ENCODE measurements at regions of chr16 and their contacts with region 1.

Region 1: DNA sequence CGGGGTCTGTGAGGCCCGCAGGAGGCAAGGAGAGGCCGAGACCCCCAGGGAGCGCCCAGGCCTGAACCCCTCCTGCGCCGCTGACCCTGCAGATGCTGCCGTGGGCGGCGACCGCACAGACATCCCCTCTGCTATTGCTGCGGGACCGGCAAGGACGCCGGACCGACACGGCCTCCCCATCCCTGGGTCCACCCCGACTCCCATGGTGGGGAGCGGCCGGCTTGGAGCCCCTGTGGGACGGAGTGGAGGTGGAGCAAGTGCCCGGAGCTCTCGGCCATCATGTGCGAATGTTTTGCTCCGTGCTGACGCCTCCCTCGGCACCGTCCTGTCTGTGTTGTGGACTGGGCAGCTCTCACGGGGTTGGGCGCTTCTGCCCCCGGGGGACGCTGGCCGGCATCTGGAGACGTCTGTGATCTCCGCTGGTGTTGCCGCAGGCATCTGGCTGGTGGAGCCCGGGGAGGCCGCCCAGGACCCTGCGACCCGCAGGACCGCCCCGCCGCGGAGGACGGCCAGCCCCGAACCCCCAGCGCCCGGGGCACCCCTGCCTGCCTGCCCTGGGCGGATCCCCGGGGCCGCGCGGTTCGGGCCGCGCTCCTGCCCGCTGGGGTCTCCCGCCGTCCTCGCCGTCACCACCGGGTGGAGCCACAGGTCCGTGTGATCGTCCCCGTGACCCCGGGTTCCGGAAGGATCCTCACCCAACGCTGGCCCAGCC is 12.8 kb upstream of the GNG13 start:
- DNase-seq: peak in 9 of 10 donors; percentile 39 to 80 (median 68)
- H3K4me3 ChIP-seq: peak overlapping the region in 51 of 59 donors; percentile 7 to 57 (median 40)
- H3K27ac ChIP-seq: peak overlapping the region in 37 of 59 donors; percentile 5 to 78 (median 51)
- H3K27me3 ChIP-seq: peaks cover 0 to 19% (median 4%) of the 10 kb centered on the region in 45 donors
- CTCF ChIP-seq: peak; percentile 24 to 88 (median 74)

Region 2: DNA sequence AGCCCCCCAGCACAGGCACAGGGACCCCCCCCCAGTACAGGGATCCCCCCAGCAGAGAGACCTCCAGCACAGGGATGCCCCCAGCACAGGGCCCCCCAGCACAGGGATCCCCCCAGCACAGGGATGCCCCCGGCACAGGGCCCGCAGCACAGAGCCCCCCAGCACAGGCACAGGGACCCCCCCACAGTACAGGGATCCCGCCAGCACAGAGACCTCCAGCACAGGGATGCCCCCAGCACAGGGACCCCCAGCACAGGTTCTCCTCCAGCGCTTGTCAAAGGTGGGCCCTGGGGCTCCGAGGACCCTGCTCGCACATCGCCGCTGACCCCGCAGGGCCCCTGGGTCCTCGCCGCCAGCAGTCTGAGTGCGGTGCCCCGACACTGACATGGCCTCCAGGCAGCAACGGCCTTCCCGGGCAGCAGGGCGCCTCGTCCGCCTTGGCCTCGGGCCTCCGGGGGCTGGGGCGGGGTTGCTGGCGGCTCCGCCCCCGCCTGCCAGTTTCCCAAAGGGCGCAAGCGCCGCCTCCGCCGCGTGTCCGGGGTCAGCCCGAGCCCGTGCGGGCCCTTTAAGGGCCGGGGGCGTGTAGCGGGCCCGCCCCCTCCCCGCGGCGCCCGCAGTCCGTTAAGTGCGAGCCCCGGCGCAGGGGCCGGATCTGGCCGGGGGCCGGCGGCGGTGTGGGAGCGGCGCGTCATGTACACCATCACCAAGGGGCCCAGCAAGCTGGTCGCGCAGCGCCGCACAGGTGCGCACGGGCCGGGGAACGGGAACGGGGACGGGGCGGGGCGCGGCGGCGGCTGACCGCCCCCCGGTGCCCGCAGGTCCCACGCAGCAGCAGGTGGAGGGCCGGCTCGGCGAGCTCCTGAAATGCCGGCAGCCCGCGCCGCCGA is 171.8 kb before region 1 on chr16 and contains the start of gene MCRIP2:
- intact Hi-C with region 1: no loop called
- DNase-seq: peak in 9 of 10 donors; percentile 54 to 90 (median 78)
- H3K4me3 ChIP-seq: peak within 1 kb of the TSS; percentile 55 to 91 (median 76)
- H3K27ac ChIP-seq: peak within 1 kb of the TSS; percentile 8 to 95 (median 82)
- H3K27me3 ChIP-seq: no peaks in the 10 kb centered on the region
- CTCF ChIP-seq: peak in 4 of 56 donors; percentile 11 to 19 (median 14)
- total RNA-seq, gene MCRIP2: 24.1 to 97.3 (median 38.0) TPM

Region 3: GRCh38 chr16:832652-833336 is 19.4 kb after region 1 on chr16:
- intact Hi-C with region 1: no loop called
- DNase-seq: no peak
- H3K4me3 ChIP-seq: no peak overlapping the region
- H3K27ac ChIP-seq: no peak overlapping the region
- H3K27me3 ChIP-seq: no peaks in the 10 kb centered on the region
- CTCF ChIP-seq: no peak

Region 4: GRCh38 chr16:877991-878784 is 64.8 kb after region 1 on chr16:
- intact Hi-C with region 1: loop called in 1 of 2 experiments (anchors 10 kb)
- DNase-seq: peak in 1 of 10 donors; percentile 41
- H3K4me3 ChIP-seq: no peak overlapping the region
- H3K27ac ChIP-seq: no peak overlapping the region
- H3K27me3 ChIP-seq: no peaks in the 10 kb centered on the region
- CTCF ChIP-seq: peak in 5 of 56 donors; percentile 10 to 27 (median 14)

Region 5: DNA sequence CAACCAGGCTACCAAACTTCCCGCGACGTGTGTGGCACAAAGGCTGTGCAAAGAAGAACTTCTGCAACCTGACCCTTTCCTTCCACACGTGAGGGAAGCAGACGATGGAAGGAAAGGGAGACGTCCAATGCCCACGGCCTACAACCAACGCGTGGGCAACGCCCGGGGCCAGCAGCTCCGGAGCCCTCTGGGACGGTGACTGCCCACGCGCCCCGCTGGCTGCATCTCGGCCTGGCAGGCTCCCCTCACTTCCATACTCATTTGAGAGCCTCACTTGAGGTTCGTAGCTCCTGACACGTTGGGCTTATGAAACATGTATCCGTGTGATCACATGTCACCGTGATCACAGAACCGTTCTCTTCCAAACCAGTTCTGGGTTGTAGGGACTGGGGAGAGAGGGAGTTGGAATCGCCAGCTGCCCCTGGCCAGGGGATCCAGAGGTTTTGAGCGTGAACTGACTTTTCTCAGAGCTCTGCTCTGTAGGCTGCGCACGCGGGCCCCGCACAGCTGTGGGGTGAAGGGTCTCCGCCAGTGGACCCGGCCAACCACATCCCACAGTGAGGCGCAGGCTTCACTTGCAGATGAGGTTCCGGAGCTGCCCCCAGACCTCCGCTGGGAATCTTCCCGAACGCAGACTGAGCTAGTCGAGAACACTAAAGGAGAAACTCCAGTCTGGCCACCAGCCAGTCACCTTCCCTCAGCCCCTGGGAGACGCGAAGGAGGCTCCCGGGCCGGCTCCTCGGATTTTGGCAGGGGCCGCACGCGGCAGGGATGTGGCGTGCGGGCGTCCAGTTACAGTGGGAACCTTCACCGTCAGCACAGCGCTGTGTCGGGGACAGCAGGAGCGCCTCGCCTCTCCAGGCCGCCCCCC is 156.4 kb after region 1 on chr16:
- intact Hi-C with region 1: loop called in 1 of 2 experiments (anchors 5 kb)
- DNase-seq: peak in 2 of 10 donors; percentile 49 to 56
- H3K4me3 ChIP-seq: peak overlapping the region; percentile 60 to 96 (median 88)
- H3K27ac ChIP-seq: peak overlapping the region in 57 of 59 donors; percentile 38 to 100 (median 98)
- H3K27me3 ChIP-seq: no peaks in the 10 kb centered on the region
- CTCF ChIP-seq: no peak

Region 6: DNA sequence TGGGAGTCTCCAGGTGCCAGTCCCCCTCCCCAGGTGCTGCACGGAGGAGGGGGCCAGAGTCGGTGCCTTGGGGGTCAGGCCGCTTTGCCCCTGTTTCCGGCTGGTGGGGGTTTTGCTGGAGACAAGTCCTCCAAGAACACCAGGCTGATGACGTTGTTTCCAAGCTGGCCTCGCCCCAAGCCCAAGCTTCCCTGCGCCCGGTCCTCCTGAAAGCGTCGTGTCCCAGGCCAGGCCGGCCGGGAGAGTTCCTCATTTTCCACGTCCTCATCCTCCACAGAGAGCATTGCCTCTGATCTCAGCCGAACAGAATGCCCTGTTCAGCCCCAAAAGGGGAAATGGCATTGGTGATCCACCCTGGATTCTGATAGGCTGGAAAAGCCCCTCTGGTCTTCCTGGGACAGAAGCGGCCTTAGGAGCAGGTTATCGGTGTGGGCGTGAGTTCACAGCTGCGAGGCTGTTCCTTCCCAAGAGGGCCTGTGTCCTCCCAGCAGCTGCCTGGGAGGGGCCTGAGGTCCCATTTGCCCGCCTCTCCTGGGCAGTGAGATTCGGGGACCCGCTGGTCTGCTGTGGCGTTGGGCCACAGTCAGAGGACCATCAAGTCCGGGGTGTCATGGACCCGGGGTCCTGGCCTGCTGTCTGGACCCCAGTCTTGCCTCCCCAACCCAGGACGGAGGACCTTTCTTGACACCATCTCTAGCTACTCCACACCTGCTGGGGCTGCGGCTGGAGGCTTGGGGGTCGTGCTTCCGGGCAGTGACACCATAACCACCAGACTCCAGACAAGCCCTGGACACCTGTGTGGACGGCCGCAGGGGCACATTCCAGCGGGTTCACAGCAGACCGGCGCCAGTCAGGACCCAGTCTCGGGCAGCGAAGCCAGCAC is 175.4 kb after region 1 on chr16:
- intact Hi-C with region 1: loop called in 1 of 2 experiments (anchors 5 kb)
- DNase-seq: no peak
- H3K4me3 ChIP-seq: no peak overlapping the region
- H3K27ac ChIP-seq: peak overlapping the region in 55 of 59 donors; percentile 2 to 99 (median 81)
- H3K27me3 ChIP-seq: peaks cover 0 to 1% (median 0%) of the 10 kb centered on the region in 45 donors
- CTCF ChIP-seq: no peak

Region 7: GRCh38 chr16:1054660-1055556 is 241.5 kb after region 1 on chr16:
- intact Hi-C with region 1: loop called (anchors 1 to 2 kb)
- DNase-seq: peak; percentile 59 to 85 (median 78)
- H3K4me3 ChIP-seq: no peak overlapping the region
- H3K27ac ChIP-seq: peak overlapping the region in 31 of 59 donors; percentile 2 to 77 (median 51)
- H3K27me3 ChIP-seq: peaks cover 0 to 9% (median 0%) of the 10 kb centered on the region in 45 donors
- CTCF ChIP-seq: peak; percentile 63 to 98 (median 92)

Region 8: DNA sequence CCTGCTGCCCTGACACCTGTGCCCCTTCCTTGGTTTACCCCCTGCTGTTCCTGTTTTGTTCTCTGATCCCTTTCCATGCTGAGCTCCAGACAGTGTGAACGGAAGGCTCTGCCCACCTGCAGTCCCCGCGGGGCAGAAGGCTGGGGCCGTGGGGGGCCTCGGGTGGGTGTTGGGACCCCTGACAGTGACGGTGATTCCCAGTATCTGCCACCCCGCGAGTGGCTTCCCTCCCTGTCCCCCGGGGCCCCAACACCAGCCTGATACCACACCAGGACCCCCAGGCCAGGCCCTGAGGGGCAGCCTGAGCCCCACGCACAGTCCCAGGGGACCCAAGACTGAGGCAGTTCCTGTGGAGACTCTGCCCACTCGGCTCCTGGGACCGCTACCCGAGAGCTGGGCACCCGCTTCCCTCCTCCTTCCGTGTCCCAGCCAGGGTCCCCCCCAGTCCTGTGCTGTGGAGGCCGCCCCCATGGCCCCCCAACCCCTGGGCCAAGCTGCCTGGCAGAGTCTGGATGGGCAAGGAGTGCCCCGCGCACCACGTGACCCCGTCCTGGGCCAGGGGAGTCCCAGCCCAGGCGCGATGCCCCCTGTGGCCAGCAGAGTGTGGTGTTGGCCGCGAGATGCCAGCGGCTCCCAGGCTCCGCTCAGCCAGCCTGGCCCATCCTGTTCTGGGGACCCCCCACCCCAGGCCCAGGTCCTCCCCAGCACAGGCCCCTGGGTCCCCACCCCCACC is 292.7 kb after region 1 on chr16:
- intact Hi-C with region 1: loop called in 1 of 2 experiments (anchors 2 kb)
- DNase-seq: peak; percentile 57 to 85 (median 74)
- H3K4me3 ChIP-seq: no peak overlapping the region
- H3K27ac ChIP-seq: no peak overlapping the region
- H3K27me3 ChIP-seq: peaks cover 0 to 65% (median 22%) of the 10 kb centered on the region in 45 donors
- CTCF ChIP-seq: peak; percentile 48 to 93 (median 82)